CD4-positive, alpha-beta memory T cell (primary cell): ENCODE measurements at regions of chr9 and their contacts with region 1.

Region 1: GRCh38 chr9:78035383-78035993 is 3.9 kb upstream of the GNAQ start:
- DNase-seq: peak; percentile 61 to 75 (median 72)
- H3K4me3 ChIP-seq: no peak overlapping the region
- H3K4me3 Mint-ChIP-seq: peak overlapping the region in 4 of 8 donors; percentile 20 to 62 (median 34)
- H3K27ac ChIP-seq: no peak overlapping the region
- H3K27ac Mint-ChIP-seq: peak overlapping the region; percentile 6 to 91 (median 70)
- H3K4me1 ChIP-seq: peaks cover 34% of the 10 kb centered on the region
- H3K4me1 Mint-ChIP-seq: peaks cover 28 to 39% (median 33%) of the 10 kb centered on the region in 4 donors
- H3K27me3 ChIP-seq: no peaks in the 10 kb centered on the region
- H3K27me3 Mint-ChIP-seq: no peaks in the 10 kb centered on the region

Region 2: DNA sequence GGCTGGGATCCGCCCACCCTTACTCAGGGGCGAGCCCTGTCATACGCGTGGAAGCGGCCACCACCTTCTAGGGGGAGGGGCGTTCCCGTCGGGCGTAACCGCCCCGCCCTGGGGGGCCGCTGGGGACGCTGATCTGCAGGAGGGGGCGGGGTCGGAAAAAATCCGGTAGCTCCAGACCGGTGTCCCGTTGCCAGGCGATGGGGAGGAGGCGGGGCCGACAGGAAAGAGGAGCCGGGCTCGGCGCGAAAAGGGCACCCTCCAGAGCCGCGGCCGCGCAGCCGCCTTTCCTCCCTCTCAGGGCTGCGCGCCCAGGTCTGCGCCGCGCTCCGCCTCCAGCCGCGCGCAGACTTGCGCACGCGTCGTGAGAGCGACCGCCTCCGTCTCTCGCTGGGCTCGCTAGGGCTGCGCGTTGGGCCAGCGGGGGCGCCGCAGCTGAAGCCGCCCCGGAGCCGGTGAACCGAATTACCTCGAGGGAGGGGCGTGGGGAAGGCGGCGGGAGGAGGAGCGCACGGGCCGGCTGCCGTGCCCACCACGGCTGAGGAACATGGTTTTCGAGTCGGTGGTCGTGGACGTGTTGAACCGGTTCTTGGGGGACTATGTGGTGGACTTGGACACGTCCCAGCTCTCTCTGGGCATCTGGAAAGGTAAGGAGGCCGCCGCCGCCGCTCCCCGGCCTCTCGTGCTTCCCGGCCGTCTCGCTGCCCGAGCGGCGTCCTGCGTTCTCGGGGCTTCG is 858.2 kb before region 1 on chr9 and contains the start of gene VPS13A:
- CTCF ChIA-PET with region 1: no interaction called
- POLR2A ChIA-PET with region 1: no interaction called
- intact Hi-C with region 1: loop called (anchors 2 kb)
- DNase-seq: peak; percentile 89 to 96 (median 89)
- H3K4me3 ChIP-seq: peak within 1 kb of the TSS; percentile 77 to 79
- H3K4me3 Mint-ChIP-seq: peak within 1 kb of the TSS; percentile 90 to 98 (median 96)
- H3K27ac ChIP-seq: peak within 1 kb of the TSS; percentile 92
- H3K27ac Mint-ChIP-seq: peak within 1 kb of the TSS; percentile 92 to 98 (median 94)
- H3K4me1 ChIP-seq: peaks cover 28% of the 10 kb centered on the region
- H3K4me1 Mint-ChIP-seq: peaks cover 20 to 46% (median 28%) of the 10 kb centered on the region in 4 donors
- H3K27me3 ChIP-seq: no peaks in the 10 kb centered on the region
- H3K27me3 Mint-ChIP-seq: no peaks in the 10 kb centered on the region
- total RNA-seq, gene VPS13A: 53.5 to 58.2 TPM

Region 3: GRCh38 chr9:77751341-77752091 is 284.0 kb before region 1 on chr9:
- CTCF ChIA-PET with region 1: interaction called, 8 read pairs
- POLR2A ChIA-PET with region 1: no interaction called
- intact Hi-C with region 1: loop called (anchors 2 kb)
- DNase-seq: peak in 2 of 5 donors; percentile 9 to 25
- H3K4me3 ChIP-seq: no peak overlapping the region
- H3K4me3 Mint-ChIP-seq: no peak overlapping the region
- H3K27ac ChIP-seq: no peak overlapping the region
- H3K27ac Mint-ChIP-seq: peak overlapping the region in 5 of 7 donors; percentile 0 to 50 (median 41)
- H3K4me1 ChIP-seq: no peaks in the 10 kb centered on the region
- H3K4me1 Mint-ChIP-seq: peaks cover 16 to 50% (median 31%) of the 10 kb centered on the region in 4 donors
- H3K27me3 ChIP-seq: no peaks in the 10 kb centered on the region
- H3K27me3 Mint-ChIP-seq: no peaks in the 10 kb centered on the region

Region 4: DNA sequence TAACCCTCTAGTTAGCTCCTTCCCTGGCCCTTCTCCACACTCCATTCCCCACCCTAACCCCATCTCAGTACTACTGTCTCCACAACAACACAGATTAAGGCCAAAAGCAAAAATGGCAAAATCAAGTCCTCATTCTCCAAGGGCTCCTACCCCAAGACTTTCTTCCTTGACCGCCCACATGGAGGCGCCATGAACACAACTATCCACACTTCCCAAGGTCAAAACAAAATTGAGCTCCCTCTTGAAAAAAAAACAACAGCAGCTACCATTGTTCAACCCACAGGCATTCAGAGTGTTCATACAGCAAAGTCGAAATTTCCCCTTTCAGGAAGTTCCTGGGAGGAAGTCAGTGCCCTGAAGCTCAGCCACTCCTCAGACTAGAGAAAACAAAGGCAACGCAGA is 58.3 kb before region 1 on chr9:
- CTCF ChIA-PET with region 1: interaction called, 129 read pairs
- POLR2A ChIA-PET with region 1: interaction called, 15 read pairs
- intact Hi-C with region 1: loop called (anchors 1 kb)
- DNase-seq: peak in 4 of 5 donors; percentile 37 to 53 (median 48)
- H3K4me3 ChIP-seq: peak overlapping the region in 1 of 2 donors; percentile 21
- H3K4me3 Mint-ChIP-seq: peak overlapping the region in 7 of 8 donors; percentile 3 to 73 (median 62)
- H3K27ac ChIP-seq: no peak overlapping the region
- H3K27ac Mint-ChIP-seq: peak overlapping the region; percentile 1 to 92 (median 43)
- H3K4me1 ChIP-seq: peaks cover 53% of the 10 kb centered on the region
- H3K4me1 Mint-ChIP-seq: peaks cover 42 to 73% (median 58%) of the 10 kb centered on the region in 4 donors
- H3K27me3 ChIP-seq: no peaks in the 10 kb centered on the region
- H3K27me3 Mint-ChIP-seq: no peaks in the 10 kb centered on the region

Region 5: GRCh38 chr9:78023003-78023741 is 12.3 kb before region 1 on chr9:
- CTCF ChIA-PET with region 1: interaction called, 19 read pairs
- POLR2A ChIA-PET with region 1: interaction called, 10 read pairs
- intact Hi-C with region 1: no loop called
- DNase-seq: no peak
- H3K4me3 ChIP-seq: no peak overlapping the region
- H3K4me3 Mint-ChIP-seq: peak overlapping the region in 3 of 8 donors; percentile 7 to 40 (median 15)
- H3K27ac ChIP-seq: no peak overlapping the region
- H3K27ac Mint-ChIP-seq: no peak overlapping the region
- H3K4me1 ChIP-seq: peaks cover 61% of the 10 kb centered on the region
- H3K4me1 Mint-ChIP-seq: peaks cover 44 to 82% (median 66%) of the 10 kb centered on the region in 4 donors
- H3K27me3 ChIP-seq: no peaks in the 10 kb centered on the region
- H3K27me3 Mint-ChIP-seq: no peaks in the 10 kb centered on the region

Region 6: GRCh38 chr9:78074385-78075291 is 39.1 kb after region 1 on chr9:
- CTCF ChIA-PET with region 1: interaction called, 34 read pairs
- POLR2A ChIA-PET with region 1: interaction called, 7 read pairs
- intact Hi-C with region 1: loop called (anchors 2 kb)
- DNase-seq: peak; percentile 31 to 55 (median 48)
- H3K4me3 ChIP-seq: peak overlapping the region in 1 of 2 donors; percentile 44
- H3K4me3 Mint-ChIP-seq: peak overlapping the region; percentile 62 to 89 (median 80)
- H3K27ac ChIP-seq: peak overlapping the region; percentile 7
- H3K27ac Mint-ChIP-seq: peak overlapping the region; percentile 80 to 96 (median 91)
- H3K4me1 ChIP-seq: peaks cover 40% of the 10 kb centered on the region
- H3K4me1 Mint-ChIP-seq: peaks cover 45 to 60% (median 54%) of the 10 kb centered on the region in 4 donors
- H3K27me3 ChIP-seq: no peaks in the 10 kb centered on the region
- H3K27me3 Mint-ChIP-seq: no peaks in the 10 kb centered on the region

Region 7: GRCh38 chr9:78235756-78236538 is 200.5 kb after region 1 on chr9 and contains the start of gene CEP78:
- CTCF ChIA-PET with region 1: interaction called, 3 read pairs
- POLR2A ChIA-PET with region 1: no interaction called
- intact Hi-C with region 1: loop called (anchors 1 kb)
- DNase-seq: peak; percentile 82 to 88 (median 85)
- H3K4me3 ChIP-seq: peak within 1 kb of the TSS; percentile 37 to 89
- H3K4me3 Mint-ChIP-seq: peak within 1 kb of the TSS in 3 of 8 donors; percentile 92 to 98 (median 97)
- H3K27ac ChIP-seq: peak within 1 kb of the TSS; percentile 81
- H3K27ac Mint-ChIP-seq: peak within 1 kb of the TSS; percentile 88 to 99 (median 96)
- H3K4me1 ChIP-seq: peaks cover 40% of the 10 kb centered on the region
- H3K4me1 Mint-ChIP-seq: peaks cover 30 to 35% (median 32%) of the 10 kb centered on the region in 4 donors
- H3K27me3 ChIP-seq: no peaks in the 10 kb centered on the region
- H3K27me3 Mint-ChIP-seq: no peaks in the 10 kb centered on the region
- total RNA-seq, gene CEP78: 25.3 to 27.6 TPM